Lower leg skin (tissue), 4 donors: ENCODE measurements at regions of chr6 and their contacts with region 1.

Region 1: GRCh38 chr6:125956506-125957390 is at the start of gene HINT3:
- DNase-seq: peak; percentile 95 to 99
- H3K4me3 ChIP-seq: peak within 1 kb of the TSS; percentile 91
- CTCF ChIP-seq: peak in 1 of 3 donors; percentile 98
- POLR2A ChIP-seq: peak in 1 of 2 donors; percentile 23
- total RNA-seq, gene HINT3: 20.9 to 42.6 (median 28.9) TPM

Region 2: DNA sequence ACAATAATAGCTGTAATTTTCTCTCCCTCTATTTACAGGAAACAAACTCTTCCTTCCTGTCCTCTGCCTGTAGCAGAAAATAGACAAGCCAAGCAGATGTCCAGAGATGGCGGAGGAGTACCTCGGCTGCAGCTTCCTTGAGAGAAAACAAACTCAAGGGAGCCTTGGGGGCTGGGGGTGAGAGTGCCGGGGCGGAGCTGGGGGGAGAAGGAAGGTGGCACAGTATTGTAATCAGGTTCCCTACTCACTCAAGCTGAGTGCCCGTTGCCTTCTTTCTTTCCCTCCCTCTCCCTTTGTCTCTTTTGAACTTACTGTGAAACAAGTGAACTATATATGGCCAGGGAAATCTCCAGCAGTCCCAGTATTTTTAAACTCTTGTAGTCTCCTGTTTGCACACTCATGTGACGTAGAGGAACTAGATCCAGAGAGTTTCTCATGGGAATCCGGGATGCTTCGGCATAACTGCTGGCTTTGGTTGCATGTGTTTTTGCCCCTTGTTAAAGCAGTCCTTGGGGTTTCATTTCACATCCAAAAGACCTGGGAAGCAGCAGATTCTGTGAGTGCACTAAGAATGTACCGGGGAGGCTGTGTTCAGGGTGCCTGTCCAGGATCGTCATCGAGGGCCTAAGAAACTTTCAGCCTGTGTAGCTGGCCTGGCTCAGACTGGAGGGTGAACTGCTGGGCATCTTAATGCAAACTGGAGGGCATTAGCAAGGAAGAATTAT is 610.4 kb before region 1 on chr6:
- intact Hi-C with region 1: no loop called
- DNase-seq: no peak
- H3K4me3 ChIP-seq: no peak overlapping the region
- CTCF ChIP-seq: no peak
- POLR2A ChIP-seq: no peak

Region 3: GRCh38 chr6:125779924-125780539 is 176.7 kb before region 1 on chr6:
- intact Hi-C with region 1: loop called (anchors 5 kb)
- DNase-seq: peak; percentile 92 to 97
- H3K4me3 ChIP-seq: peak overlapping the region; percentile 35
- CTCF ChIP-seq: no peak
- POLR2A ChIP-seq: no peak

Region 4: DNA sequence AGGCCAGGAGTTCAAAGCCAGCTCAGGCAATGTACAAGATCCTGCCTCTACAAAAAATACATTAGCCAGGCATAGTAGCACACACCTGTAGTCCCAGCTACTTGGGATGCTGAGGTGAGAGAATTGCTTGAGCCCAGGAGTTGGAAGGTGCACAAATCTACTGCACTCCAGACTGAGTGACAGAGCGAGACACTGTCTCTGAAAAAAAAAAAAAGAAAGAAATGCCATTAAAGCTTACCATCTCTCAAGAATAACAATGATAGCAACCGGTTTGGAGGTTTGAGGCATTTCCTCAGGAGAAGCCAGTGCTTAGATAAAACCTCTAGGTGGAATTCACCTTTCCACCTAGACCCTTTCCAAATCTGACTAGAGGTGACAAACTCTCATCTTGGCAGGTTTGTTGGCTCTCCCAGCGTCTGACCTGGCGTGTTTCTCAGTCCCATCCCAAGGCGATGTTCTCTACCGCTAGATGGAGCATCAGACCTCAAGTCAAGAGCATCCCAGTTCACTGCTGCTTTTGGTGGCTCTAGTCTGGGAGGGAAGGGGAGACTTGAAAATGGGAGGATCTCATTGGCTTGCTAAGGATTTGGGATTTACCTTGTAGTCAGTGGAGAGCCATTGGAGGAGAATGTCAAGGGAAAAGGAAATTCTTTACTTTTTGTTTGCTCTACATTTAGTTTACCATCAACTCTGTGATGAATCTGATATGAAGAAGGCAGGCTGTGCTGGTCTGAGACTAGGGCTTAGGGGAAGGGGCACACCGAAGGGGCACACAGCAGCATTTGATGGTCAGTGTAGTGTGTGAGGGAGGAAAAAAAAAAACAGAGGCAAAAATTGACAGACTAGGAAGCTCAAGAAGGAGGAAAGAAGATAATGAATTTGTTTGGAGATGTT is 98.1 kb before region 1 on chr6:
- intact Hi-C with region 1: loop called (anchors 5 kb)
- DNase-seq: peak in 1 of 2 donors; percentile 41
- H3K4me3 ChIP-seq: no peak overlapping the region
- CTCF ChIP-seq: peak in 1 of 3 donors; percentile 32
- POLR2A ChIP-seq: no peak